A673 (cell line): ENCODE measurements at regions of chr7 and their contacts with region 1.

Region 1: DNA sequence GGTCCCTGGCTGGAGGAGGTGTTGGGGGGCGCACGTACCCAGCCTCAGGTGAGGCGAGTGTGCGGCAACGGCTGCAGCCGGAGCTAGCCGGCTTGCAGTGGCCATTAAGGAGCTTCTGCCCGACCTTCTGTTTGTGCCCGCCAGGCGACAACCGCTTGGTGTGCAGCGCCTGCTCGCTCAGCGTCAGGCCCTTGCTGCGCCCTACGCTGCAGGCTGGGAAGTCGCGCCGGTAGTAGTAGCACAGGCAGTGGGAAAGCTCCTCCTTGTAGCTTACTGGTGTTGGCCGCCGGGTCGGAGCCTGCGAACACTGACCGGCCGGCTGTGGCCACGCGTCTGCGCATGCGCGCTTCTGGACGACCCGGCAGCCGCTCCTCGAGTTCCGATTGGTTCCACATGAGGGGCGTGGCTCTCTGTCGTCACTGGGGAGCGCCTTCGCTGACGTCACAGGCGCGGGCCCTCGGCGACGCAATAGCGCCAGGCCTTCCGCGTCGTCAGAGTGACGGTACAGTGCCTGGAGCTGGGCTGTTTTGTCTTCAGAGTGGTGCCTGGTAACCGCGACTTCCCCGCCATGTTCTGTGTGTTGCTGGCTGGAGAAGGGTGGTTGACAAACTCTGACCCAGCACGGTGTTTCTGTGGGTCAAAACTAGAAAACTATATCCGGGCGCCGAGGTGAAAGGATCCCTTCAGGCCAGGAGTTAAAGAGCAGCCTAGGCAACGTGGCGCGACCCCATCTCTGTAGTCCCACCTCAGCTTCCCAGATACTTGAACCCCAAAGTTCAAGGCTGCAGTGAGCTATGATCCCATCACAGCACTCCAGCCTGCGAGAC is 76.3 kb upstream of the TMEM248 start:
- DNase-seq: peak; percentile 97
- H3K4me3 ChIP-seq: peak overlapping the region; percentile 83
- H3K27ac ChIP-seq: peak overlapping the region; percentile 97
- H3K4me1 ChIP-seq: peaks cover 6% of the 10 kb centered on the region
- H3K27me3 ChIP-seq: no peaks in the 10 kb centered on the region
- CTCF ChIP-seq: peak; percentile 21

Region 2: GRCh38 chr7:66687186-66687585 is 157.6 kb before region 1 on chr7:
- CTCF ChIA-PET with region 1: no interaction called
- POLR2A ChIA-PET with region 1: no interaction called
- intact Hi-C with region 1: loop called (anchors 5 kb)
- DNase-seq: no peak
- H3K4me3 ChIP-seq: no peak overlapping the region
- H3K27ac ChIP-seq: no peak overlapping the region
- H3K4me1 ChIP-seq: no peaks in the 10 kb centered on the region
- H3K27me3 ChIP-seq: no peaks in the 10 kb centered on the region
- CTCF ChIP-seq: no peak

Region 3: GRCh38 chr7:66804001-66804400 is 40.8 kb before region 1 on chr7:
- CTCF ChIA-PET with region 1: no interaction called
- POLR2A ChIA-PET with region 1: interaction called, 16 read pairs
- intact Hi-C with region 1: no loop called
- DNase-seq: no peak
- H3K4me3 ChIP-seq: no peak overlapping the region
- H3K27ac ChIP-seq: no peak overlapping the region
- H3K4me1 ChIP-seq: no peaks in the 10 kb centered on the region
- H3K27me3 ChIP-seq: no peaks in the 10 kb centered on the region
- CTCF ChIP-seq: no peak